ENCODE measurements at regions of chr17 and their contacts with region 1.

Region 1: DNA sequence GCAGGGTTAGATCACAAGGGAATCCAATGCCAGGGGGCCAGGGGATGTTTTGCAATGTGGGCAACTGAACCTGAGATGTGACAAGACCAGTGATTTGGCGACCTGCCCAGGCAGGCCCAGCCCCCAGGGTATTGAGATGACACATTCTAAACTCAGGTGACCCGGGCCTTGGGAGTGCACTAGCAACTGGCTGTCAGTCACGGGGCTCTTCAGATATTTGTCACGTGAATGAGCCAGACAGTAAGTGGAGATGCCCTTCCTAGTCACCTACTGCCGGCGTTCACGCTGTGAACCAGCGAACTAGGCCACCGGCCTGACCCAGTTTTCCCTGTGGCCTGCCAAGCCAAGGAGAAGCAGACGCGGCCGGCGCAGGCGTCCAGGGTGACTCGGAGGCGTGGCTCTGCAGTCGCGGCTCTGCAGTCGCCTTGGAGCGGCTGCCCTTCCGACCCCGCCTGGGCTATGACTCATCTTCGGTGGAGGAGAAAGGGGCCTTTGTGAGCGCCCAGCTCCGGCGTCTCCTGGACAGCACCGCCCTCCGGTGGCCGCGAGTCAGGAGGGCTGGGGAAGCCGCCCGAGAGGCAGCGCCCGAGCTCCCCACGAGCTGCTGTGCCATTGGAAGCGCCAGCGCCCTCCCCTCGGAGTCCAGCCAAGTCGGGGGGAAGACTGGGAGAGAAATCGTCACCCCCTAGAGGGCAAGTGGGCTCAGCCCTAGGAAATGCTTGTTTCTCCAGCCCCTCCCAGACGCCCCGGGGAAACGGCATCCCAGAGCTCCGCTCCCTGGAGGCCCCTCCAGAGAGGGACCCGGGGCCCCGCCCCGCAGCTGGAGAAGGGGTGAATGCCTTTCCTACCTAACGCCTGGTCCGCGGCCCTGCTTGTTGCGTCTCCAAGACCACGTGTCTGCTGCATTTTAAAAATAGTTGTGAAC is 38.8 kb downstream of the WSB1 start:
- DNase-seq: peak; percentile 99
- ATAC-seq: peak; percentile 97
- H3K4me3 ChIP-seq: peak overlapping the region; percentile 54
- H3K27ac ChIP-seq: peak overlapping the region; percentile 88
- H3K4me1 ChIP-seq: peaks cover 19% of the 10 kb centered on the region
- H3K27me3 ChIP-seq: no peaks in the 10 kb centered on the region
- CTCF ChIP-seq: peak; percentile 91

Region 2: DNA sequence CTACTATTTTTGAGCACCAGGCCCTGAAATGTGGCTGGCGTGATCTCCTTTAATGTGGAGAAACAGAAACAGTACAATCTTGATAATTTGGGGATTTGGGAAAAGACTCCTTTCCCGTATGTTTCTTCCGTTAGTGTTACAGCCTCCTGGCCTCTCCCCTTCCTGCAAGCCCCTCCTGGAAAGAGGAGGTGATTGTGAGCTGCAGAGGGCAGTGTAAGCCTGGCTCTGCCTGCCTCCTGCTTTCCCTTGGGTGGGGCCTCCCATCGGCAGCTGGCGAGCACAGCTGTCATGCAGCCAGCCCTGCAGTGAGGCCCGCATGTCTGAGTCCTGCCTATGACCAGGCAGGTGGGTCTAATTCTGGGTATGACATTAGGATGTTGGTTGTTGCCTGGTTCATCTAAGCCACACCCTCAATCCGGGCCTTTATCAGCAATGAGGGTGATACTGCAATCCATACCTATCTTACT is 87.5 kb before region 1 on chr17:
- intact Hi-C with region 1: loop called (anchors 10 kb)
- DNase-seq: peak; percentile 92
- ATAC-seq: peak; percentile 87
- H3K4me3 ChIP-seq: peak overlapping the region; percentile 30
- H3K27ac ChIP-seq: peak overlapping the region; percentile 83
- H3K4me1 ChIP-seq: peaks cover 80% of the 10 kb centered on the region
- H3K27me3 ChIP-seq: no peaks in the 10 kb centered on the region
- CTCF ChIP-seq: peak; percentile 74

Region 3: GRCh38 chr17:27506348-27507231 is 173.8 kb after region 1 on chr17:
- intact Hi-C with region 1: no loop called
- DNase-seq: no peak
- ATAC-seq: no peak
- H3K4me3 ChIP-seq: no peak overlapping the region
- H3K27ac ChIP-seq: no peak overlapping the region
- H3K4me1 ChIP-seq: peaks cover 20% of the 10 kb centered on the region
- H3K27me3 ChIP-seq: no peaks in the 10 kb centered on the region
- CTCF ChIP-seq: no peak